BJ (cell line): ENCODE measurements at regions of chr19 and their contacts with region 1.

Region 1: DNA sequence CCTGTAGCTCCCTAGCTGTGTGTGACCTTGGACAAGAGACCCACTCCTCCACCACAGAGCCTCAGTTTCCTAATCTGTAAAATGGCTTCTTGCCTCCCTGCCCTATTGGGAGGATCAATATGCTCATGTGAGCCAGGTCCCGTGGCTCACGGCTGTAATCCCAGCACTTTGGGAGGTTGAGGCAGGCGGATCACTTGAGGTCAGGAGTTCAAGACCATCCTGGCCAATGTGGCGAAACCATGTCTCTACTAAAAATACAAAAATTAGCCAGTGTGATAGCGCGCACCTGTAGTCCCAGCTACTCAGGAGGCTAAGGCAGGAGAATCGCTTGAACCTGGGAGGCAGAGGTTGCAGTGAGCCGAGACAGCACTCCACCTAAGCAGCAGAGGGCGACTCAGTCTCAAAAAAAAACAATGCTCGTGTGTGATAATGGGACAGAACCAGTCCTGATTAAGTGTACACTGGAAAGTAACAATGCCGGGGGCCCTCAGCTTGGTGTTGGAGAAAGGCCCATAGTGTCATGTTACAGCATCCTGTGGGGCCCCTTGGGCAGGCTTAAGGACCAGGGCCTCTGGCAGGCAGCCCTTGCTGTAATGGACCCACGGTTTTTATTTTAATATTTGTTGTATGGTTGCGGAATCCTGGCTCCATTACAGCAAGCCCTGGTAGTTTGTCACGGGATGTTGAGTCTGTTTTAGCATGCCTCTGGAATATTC is 6.8 kb downstream of the RPS11 start:
- DNase-seq: peak; percentile 49
- H3K4me3 ChIP-seq: no peak overlapping the region
- H3K27me3 ChIP-seq: no peaks in the 10 kb centered on the region
- CTCF ChIP-seq: peak; percentile 68

Region 2: DNA sequence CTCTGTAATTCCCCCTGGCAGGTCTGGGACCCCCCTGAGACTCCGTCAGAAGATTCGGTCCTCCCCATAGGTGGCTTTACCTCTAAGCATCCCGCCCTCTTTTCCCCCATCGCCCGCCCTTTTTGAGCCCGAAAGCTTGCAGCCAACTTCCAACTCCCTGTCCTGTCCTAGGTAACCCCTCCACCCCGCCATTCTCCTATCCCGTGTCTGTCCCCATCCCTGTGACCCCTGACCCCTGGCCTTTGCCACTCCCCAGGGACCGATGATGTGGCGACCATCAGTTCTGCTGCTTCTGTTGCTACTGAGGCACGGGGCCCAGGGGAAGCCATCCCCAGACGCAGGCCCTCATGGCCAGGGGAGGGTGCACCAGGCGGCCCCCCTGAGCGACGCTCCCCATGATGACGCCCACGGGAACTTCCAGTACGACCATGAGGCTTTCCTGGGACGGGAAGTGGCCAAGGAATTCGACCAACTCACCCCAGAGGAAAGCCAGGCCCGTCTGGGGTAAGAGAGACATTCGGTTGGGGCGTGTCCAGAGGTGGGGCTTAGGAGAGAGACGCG is 25.3 kb after region 1 on chr19:
- CTCF ChIA-PET with region 1: interaction called, 11 read pairs
- POLR2A ChIA-PET with region 1: interaction called, 4 read pairs
- DNase-seq: no peak
- H3K4me3 ChIP-seq: peak overlapping the region; percentile 73
- H3K27me3 ChIP-seq: no peaks in the 10 kb centered on the region
- CTCF ChIP-seq: no peak

Region 3: DNA sequence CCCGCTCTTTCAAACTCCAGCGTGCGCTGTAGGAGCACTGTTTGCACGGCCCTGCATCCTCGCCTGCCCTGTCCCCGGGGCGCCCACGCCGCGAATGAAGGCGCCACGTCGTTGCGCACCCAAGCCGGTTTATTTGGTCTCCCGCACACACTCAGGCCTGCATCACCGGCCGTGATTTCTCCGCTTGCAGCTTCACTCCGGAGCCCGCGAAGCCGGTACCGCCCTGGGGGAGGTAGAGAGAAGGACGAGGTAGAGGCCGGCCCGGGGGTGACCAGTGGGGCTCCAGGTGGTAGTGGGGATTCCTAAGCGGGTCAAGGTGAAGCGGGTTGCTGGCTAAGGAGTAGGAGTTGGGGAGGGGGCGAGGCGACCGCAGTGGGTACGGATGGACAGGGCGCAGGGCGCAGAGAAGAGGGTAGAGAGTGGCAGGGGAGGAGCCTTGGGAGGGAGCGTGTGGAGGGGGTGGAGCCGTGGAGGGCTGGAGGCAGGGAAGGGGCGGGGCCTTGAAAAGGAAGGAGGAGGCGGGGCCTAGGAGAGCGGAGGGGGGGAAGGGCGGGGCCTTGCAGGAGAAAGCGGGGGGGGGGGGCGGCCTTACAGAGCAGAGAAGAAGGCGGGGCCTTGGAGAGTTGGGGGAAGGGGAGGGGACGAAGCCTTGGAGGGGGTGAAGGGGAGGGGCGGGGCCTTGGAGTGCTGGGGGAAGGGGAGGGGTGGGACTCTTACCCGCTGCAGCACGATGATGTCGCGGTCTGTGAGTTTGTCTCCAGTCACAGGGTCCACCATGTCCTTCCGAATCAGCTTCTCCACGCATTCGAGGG is 52.8 kb after region 1 on chr19:
- CTCF ChIA-PET with region 1: interaction called, 151 read pairs
- POLR2A ChIA-PET with region 1: no interaction called
- DNase-seq: no peak
- H3K4me3 ChIP-seq: no peak overlapping the region
- H3K27me3 ChIP-seq: no peaks in the 10 kb centered on the region
- CTCF ChIP-seq: no peak

Region 4: DNA sequence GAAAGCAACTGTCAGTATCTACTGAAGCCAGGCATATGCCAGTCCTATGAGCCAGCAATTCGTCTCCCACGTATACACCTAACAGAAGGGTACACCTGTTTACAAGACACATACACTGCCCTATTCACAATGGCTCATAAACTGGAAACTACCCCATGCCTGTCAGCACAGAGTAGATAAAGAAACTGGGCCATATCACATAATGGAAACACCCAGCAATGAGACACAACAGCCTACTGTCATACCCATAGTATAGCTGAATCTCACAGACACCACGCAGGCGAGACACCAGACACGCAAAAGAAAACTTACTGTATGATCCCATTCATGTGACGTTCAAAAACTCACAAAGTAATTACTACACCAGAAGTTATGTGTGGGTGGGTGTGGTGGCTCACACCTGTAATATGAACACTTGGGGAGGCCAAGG is 61.6 kb after region 1 on chr19:
- CTCF ChIA-PET with region 1: interaction called, 34 read pairs
- POLR2A ChIA-PET with region 1: no interaction called
- DNase-seq: no peak
- H3K4me3 ChIP-seq: no peak overlapping the region
- H3K27me3 ChIP-seq: no peaks in the 10 kb centered on the region
- CTCF ChIP-seq: no peak